Right ventricle myocardium superior (tissue), 1 donor: ENCODE measurements at regions of chr16 and their contacts with region 1.

Region 1: DNA sequence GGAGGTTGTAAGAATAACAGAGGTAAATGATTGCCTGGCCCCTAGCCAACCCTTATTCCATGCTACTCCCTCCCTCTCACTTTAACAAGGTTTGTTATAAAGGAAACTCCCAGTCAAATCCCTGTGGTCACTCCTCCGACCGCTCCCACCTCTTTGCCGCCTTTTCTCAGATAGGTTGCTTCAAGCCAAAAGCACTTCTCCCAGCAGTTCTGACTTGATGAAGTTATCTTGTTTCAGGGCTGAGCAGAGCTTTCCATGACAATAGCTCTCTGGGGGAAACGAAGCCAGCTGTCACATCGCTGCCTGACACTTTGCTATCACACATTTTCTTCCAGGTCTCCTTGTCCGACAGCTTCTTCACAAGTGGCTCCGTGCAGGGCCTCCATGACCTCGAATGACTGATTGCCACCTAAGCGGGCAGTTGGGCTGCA is 278.6 kb downstream of the HAPSTR1 start:
- DNase-seq: peak; percentile 66
- ATAC-seq: peak; percentile 80

Region 2: DNA sequence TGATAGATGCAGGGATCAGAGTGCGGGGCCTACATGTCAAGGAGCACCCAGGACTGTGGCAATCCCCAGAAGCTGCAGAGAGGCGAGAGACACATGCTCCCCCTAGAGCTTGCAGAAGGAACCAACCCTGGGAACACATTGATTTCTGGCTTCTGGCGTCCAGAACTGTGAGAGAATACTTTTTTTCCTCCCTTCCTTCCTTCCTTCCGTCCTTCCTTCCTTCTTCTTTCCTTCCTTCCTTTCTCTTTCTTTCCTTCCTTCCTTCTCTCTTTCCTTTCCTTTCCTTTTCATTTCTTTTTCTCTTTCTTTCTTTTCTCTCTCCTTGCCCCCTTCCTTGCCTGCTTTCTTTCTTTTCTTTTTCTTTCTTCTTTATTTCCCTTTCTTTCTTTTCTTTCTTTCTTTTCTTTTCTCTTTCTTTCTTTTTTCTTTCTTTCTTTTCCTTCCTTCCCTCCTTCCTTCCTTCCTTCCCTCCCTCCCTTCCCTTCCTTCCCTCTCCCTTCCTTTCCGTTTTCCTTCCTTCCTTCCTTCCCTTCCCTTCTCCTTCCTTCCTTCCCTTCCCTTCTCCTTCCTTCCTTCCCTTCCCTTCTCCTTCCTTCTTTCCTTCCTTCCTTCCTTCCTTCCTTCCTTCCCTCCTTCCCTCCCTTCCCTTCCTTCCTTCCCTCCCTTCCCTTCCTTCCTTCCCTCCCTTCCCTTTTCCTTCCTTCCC is 144.3 kb before region 1 on chr16:
- intact Hi-C with region 1: no loop called
- DNase-seq: no peak
- ATAC-seq: no peak

Region 3: GRCh38 chr16:9447195-9447551 is 77.1 kb after region 1 on chr16:
- intact Hi-C with region 1: loop called (anchors 2 kb)
- DNase-seq: peak; percentile 84
- ATAC-seq: peak; percentile 94